SK-N-SH (cell line): ENCODE measurements at regions of chr1 and their contacts with region 1.

Region 1: DNA sequence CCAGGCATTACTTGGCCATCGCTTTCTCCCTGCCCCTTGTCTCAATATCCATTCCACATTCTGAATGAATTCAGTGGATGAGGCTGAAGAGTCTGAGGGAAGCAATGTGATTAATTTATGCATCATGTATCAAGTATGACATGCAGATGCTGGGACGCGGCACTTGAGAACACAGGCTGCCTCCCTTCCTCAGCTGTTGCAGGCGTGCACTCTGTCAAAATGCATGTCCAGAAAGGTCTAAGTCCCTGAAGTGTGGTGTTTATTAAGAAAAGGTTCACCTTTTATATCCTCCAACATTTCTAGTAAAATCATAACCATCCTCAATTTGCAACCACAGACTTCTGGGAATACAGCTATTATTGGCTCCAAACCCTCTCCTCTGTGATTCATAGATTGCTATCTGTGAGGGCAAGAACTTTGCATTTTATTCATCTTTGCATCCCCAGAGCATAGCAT is 22.6 kb upstream of the RAB3GAP2 start:
- DNase-seq: no peak
- H3K4me3 ChIP-seq: peak overlapping the region; percentile 22 to 48; a peak in 2 of 4 replicates
- H3K27ac ChIP-seq: peak overlapping the region; percentile 76; a peak in 3 of 4 replicates
- H3K4me1 ChIP-seq: peaks cover 7 to 13% of the 10 kb centered on the region in 2 experiments; a peak in 3 of 4 replicates
- H3K27me3 ChIP-seq: no peaks in the 10 kb centered on the region
- CTCF ChIP-seq: no peak
- EP300 ChIP-seq: peak; percentile 33 to 85; a peak in 3 of 4 replicates
- RAD21 ChIP-seq: no peak

Region 2: GRCh38 chr1:220272047-220272840 is 22.6 kb before region 1 on chr1 and contains the start of gene RAB3GAP2:
- CTCF ChIA-PET with region 1: interaction called, 10 read pairs
- POLR2A ChIA-PET with region 1: interaction called, 4 read pairs
- DNase-seq: peak; percentile 97
- H3K4me3 ChIP-seq: peak within 1 kb of the TSS; percentile 61 to 92
- H3K27ac ChIP-seq: peak within 1 kb of the TSS; percentile 82 to 96
- H3K4me1 ChIP-seq: peaks cover 11% of the 10 kb centered on the region in 2 experiments; a peak in 3 of 4 replicates
- H3K27me3 ChIP-seq: no peaks in the 10 kb centered on the region
- CTCF ChIP-seq: no peak
- EP300 ChIP-seq: no peak
- RAD21 ChIP-seq: no peak
- polyA plus RNA-seq, gene RAB3GAP2: 9.3 and 11.7 TPM in 2 replicates

Region 3: GRCh38 chr1:220281159-220281574 is 13.7 kb before region 1 on chr1:
- CTCF ChIA-PET with region 1: interaction called, 76 read pairs
- POLR2A ChIA-PET with region 1: no interaction called
- DNase-seq: peak; percentile 18
- H3K4me3 ChIP-seq: no peak overlapping the region
- H3K27ac ChIP-seq: no peak overlapping the region
- H3K4me1 ChIP-seq: peaks cover 0 to 6% of the 10 kb centered on the region in 2 experiments; a peak in 2 of 4 replicates
- H3K27me3 ChIP-seq: no peaks in the 10 kb centered on the region
- CTCF ChIP-seq: peak; percentile 83
- EP300 ChIP-seq: no peak
- RAD21 ChIP-seq: peak; percentile 80

Region 4: GRCh38 chr1:220386494-220387215 is 91.8 kb after region 1 on chr1:
- CTCF ChIA-PET with region 1: no interaction called
- POLR2A ChIA-PET with region 1: no interaction called
- DNase-seq: no peak
- H3K4me3 ChIP-seq: no peak overlapping the region
- H3K27ac ChIP-seq: no peak overlapping the region
- H3K4me1 ChIP-seq: peaks cover 0 to 7% of the 10 kb centered on the region in 2 experiments; a peak in 2 of 4 replicates
- H3K27me3 ChIP-seq: no peaks in the 10 kb centered on the region
- CTCF ChIP-seq: no peak
- EP300 ChIP-seq: no peak
- RAD21 ChIP-seq: no peak

Region 5: GRCh38 chr1:220462776-220463175 is 167.9 kb after region 1 on chr1:
- CTCF ChIA-PET with region 1: interaction called, 10 read pairs
- POLR2A ChIA-PET with region 1: no interaction called
- DNase-seq: peak; percentile 40
- H3K4me3 ChIP-seq: no peak overlapping the region
- H3K27ac ChIP-seq: no peak overlapping the region
- H3K4me1 ChIP-seq: no peaks in the 10 kb centered on the region; a peak in 1 of 4 replicates
- H3K27me3 ChIP-seq: no peaks in the 10 kb centered on the region
- CTCF ChIP-seq: no peak
- EP300 ChIP-seq: no peak
- RAD21 ChIP-seq: no peak

Region 6: DNA sequence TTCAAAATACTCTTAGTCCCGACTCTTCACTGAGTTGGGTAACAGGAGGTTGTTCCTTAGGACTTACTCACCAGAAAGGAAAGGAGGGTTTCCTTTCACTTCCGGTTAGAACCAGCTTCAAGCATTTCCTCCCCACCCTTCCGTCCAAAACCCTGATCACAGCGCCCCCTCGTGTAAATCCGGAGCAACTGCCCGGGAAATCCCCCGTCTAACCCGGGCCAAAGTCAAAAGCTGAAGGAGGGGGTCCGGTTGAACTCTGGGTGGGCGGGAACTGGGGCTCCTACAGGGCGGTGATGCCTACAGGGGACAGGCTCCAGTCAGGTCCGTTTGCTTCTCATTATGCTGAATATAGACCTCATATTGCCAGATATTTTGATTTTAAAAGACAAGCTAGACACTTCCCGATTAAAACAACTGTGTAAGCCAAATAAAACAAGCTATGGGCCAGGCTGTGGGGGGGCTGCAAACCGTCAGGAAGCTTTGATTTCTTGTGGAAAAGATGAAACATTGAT is 438.3 kb after region 1 on chr1:
- CTCF ChIA-PET with region 1: interaction called, 10 read pairs
- POLR2A ChIA-PET with region 1: no interaction called
- DNase-seq: peak; percentile 84
- H3K4me3 ChIP-seq: peak overlapping the region; percentile 2 to 33; a peak in 3 of 4 replicates
- H3K27ac ChIP-seq: peak overlapping the region; percentile 17 to 21; a peak in 3 of 4 replicates
- H3K4me1 ChIP-seq: peaks cover 5 to 15% of the 10 kb centered on the region in 2 experiments; a peak in 3 of 4 replicates
- H3K27me3 ChIP-seq: no peaks in the 10 kb centered on the region
- CTCF ChIP-seq: peak; percentile 85
- EP300 ChIP-seq: 0 out of 4 replicates have a peak, but pooled peaks of 1 of the 2 experiments have one; percentile 8
- RAD21 ChIP-seq: peak; percentile 76